ENCODE measurements at regions of chr5 and their contacts with region 1.

Region 1: GRCh38 chr5:138038826-138039225 is 5.9 kb upstream of the FAM13B start:
- DNase-seq: no peak
- H3K4me3 ChIP-seq: no peak overlapping the region
- H3K27ac ChIP-seq: no peak overlapping the region
- H3K4me1 ChIP-seq: no peaks in the 10 kb centered on the region
- H3K27me3 ChIP-seq: no peaks in the 10 kb centered on the region
- CTCF ChIP-seq: no peak

Region 2: GRCh38 chr5:138065102-138065501 is 26.3 kb after region 1 on chr5:
- intact Hi-C with region 1: loop called (anchors 2 kb)
- DNase-seq: no peak
- H3K4me3 ChIP-seq: no peak overlapping the region
- H3K27ac ChIP-seq: no peak overlapping the region
- H3K4me1 ChIP-seq: no peaks in the 10 kb centered on the region
- H3K27me3 ChIP-seq: no peaks in the 10 kb centered on the region
- CTCF ChIP-seq: no peak

Region 3: DNA sequence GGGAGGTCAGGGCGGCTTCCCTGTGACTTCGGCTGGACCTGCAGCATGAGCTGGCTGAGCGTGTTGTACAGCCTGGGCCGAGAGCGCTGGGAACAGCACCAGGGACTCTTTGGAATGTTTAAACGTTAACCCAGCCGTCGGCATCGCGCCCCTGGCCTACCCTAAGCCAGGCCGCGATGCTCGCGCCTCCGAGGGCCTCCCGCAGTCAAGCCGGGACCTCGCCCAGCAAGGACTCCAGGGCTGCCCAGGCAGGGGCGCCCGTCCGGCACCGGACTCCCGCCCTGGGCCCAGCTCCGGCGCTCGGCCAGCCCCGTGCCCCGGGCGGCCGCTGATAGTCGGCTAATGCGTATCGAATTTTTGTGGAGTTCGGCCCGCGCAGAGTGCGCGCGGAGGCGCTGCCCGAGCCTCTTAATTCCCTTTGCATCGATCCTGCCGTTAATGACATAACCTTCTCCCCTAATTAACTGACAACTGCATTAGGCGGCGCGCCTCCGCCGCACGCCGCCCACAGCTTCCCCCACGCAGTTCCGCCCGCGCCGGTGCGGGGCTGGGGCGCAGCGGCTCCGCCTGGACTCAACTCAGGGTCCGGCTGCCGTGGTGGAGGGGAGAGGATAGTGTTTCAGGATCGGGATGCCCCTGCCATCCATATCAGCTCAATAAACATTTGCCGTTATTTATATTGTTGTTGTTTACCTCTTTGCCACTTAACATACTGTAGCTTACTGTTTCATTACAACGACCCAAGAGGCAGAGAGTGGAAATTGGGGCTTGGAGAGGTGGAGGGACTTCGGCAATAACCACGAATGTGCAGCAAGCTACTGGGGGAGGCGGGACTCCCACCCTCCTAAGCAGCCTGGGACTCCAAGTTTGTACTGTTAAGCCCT is 203.1 kb after region 1 on chr5:
- intact Hi-C with region 1: no loop called
- DNase-seq: no peak
- H3K4me3 ChIP-seq: peak overlapping the region; percentile 35
- H3K27ac ChIP-seq: no peak overlapping the region
- H3K4me1 ChIP-seq: no peaks in the 10 kb centered on the region
- H3K27me3 ChIP-seq: peaks cover 28% of the 10 kb centered on the region
- CTCF ChIP-seq: no peak

Region 4: DNA sequence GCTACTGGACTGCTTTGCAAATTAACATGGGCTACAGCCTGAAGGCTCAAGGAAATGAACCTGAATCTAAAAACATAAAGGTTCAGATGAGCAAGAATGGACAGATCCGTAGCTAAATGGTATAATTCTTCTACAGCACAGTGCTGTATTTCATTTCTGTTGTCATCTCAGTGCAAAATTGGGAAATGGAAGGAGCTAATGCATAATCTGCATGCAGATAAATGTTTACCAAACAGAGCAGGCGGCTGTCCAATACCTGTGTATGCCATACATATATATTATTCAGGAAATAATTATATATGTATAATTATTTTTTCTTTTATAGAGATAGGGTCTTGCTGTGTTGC is 540.7 kb after region 1 on chr5:
- intact Hi-C with region 1: no loop called
- DNase-seq: no peak
- H3K4me3 ChIP-seq: no peak overlapping the region
- H3K27ac ChIP-seq: no peak overlapping the region
- H3K4me1 ChIP-seq: no peaks in the 10 kb centered on the region
- H3K27me3 ChIP-seq: no peaks in the 10 kb centered on the region
- CTCF ChIP-seq: no peak